CD8-positive, alpha-beta memory T cell (primary cell): ENCODE measurements at regions of chr5 and their contacts with region 1.

Region 1: DNA sequence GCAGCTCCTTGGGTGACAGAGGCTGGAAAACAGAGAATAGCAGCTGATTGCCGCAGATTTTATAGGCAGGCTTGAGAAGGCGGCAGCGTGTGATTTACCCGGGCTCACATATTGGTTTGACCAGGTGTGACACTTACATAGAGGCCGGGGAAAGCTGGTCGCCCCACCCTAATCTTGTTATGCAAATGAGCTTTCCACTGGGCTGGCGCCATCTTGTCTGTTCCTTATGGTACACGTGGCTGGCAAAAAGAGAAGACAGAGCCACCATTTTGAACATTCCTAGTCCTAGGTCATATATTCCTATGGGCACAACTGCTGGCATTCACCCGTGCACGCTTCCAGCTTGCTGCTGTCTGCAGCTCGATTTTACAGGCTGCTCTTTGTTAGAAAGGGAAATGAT is 11.3 kb upstream of the SPZ1 start:
- DNase-seq: no peak
- H3K4me3 ChIP-seq: no peak overlapping the region
- H3K4me3 Mint-ChIP-seq: no peak overlapping the region
- H3K27ac ChIP-seq: no peak overlapping the region
- H3K27ac Mint-ChIP-seq: peak overlapping the region in 1 of 8 donors; percentile 51
- H3K4me1 ChIP-seq: no peaks in the 10 kb centered on the region
- H3K4me1 Mint-ChIP-seq: no peaks in the 10 kb centered on the region
- H3K27me3 ChIP-seq: no peaks in the 10 kb centered on the region
- H3K27me3 Mint-ChIP-seq: peaks cover 0 to 4% of the 10 kb centered on the region in 2 donors

Region 2: DNA sequence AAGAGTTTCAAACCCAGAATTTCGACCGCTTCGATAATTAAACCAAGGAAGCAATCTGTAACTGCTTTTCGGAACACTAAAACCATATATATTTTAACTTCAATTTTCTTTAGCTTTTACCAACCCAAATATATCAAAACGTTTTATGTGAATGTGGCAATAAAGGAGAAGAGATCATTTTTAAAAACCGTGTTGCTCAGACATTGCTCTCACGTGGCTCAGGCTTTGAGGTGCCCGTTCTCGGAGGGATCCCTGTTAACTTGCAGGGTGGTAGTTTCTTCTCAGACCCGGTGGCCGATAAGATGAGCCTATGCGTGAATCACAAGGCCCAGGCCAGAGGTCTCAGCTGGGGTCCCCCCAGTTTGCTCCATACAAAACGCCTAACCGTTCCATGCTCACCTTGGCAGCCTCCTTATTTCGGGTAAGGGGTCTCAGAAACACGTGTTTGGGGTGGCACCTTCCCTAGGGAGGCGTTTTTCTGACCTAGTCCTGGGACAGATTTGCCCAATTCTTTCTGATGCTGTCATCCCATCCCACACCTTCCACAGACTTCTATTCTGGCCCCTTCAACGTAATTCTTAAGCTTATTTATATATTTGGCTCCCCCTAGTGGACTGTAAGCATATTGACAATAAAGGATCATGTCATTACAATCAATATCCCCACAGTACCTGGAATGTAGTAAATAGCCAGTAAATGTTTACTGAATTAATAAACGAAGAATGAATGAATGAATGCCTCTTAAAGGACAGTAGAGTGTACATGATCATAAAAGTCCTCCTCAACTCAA is 225.2 kb before region 1 on chr5:
- CTCF ChIA-PET with region 1: interaction called, 181 read pairs
- POLR2A ChIA-PET with region 1: no interaction called
- DNase-seq: peak in 2 of 5 donors; percentile 51 to 57
- H3K4me3 ChIP-seq: peak overlapping the region; percentile 42
- H3K4me3 Mint-ChIP-seq: peak overlapping the region; percentile 55 to 86 (median 75)
- H3K27ac ChIP-seq: no peak overlapping the region
- H3K27ac Mint-ChIP-seq: peak overlapping the region; percentile 4 to 92 (median 60)
- H3K4me1 ChIP-seq: peaks cover 4% of the 10 kb centered on the region
- H3K4me1 Mint-ChIP-seq: peaks cover 9 to 15% (median 13%) of the 10 kb centered on the region in 3 donors
- H3K27me3 ChIP-seq: no peaks in the 10 kb centered on the region
- H3K27me3 Mint-ChIP-seq: no peaks in the 10 kb centered on the region

Region 3: GRCh38 chr5:80275347-80275746 is 33.2 kb before region 1 on chr5:
- CTCF ChIA-PET with region 1: interaction called, 10 read pairs
- POLR2A ChIA-PET with region 1: interaction called, 4 read pairs
- DNase-seq: peak in 2 of 5 donors; percentile 16 to 58
- H3K4me3 ChIP-seq: no peak overlapping the region
- H3K4me3 Mint-ChIP-seq: no peak overlapping the region
- H3K27ac ChIP-seq: no peak overlapping the region
- H3K27ac Mint-ChIP-seq: no peak overlapping the region
- H3K4me1 ChIP-seq: peaks cover 20% of the 10 kb centered on the region
- H3K4me1 Mint-ChIP-seq: peaks cover 7 to 12% (median 8%) of the 10 kb centered on the region in 3 donors
- H3K27me3 ChIP-seq: no peaks in the 10 kb centered on the region
- H3K27me3 Mint-ChIP-seq: peaks cover 0 to 4% of the 10 kb centered on the region in 2 donors

Region 4: GRCh38 chr5:80503641-80504040 is 195.1 kb after region 1 on chr5:
- CTCF ChIA-PET with region 1: no interaction called
- POLR2A ChIA-PET with region 1: no interaction called
- DNase-seq: no peak
- H3K4me3 ChIP-seq: no peak overlapping the region
- H3K4me3 Mint-ChIP-seq: no peak overlapping the region
- H3K27ac ChIP-seq: no peak overlapping the region
- H3K27ac Mint-ChIP-seq: no peak overlapping the region
- H3K4me1 ChIP-seq: no peaks in the 10 kb centered on the region
- H3K4me1 Mint-ChIP-seq: peaks cover 0 to 6% (median 2%) of the 10 kb centered on the region in 3 donors
- H3K27me3 ChIP-seq: no peaks in the 10 kb centered on the region
- H3K27me3 Mint-ChIP-seq: peaks cover 0 to 5% of the 10 kb centered on the region in 2 donors